ENCODE measurements at regions of chr12 and their contacts with region 1.

Region 1: GRCh38 chr12:92034858-92035401 is 110.7 kb downstream of the BTG1 start:
- DNase-seq: peak; percentile 86
- H3K4me3 Mint-ChIP-seq: peak overlapping the region; percentile 78
- H3K27ac Mint-ChIP-seq: peak overlapping the region; percentile 93
- H3K4me1 Mint-ChIP-seq: peaks cover 83% of the 10 kb centered on the region
- H3K27me3 Mint-ChIP-seq: no peaks in the 10 kb centered on the region

Region 2: GRCh38 chr12:91998316-91998715 is 36.6 kb before region 1 on chr12:
- CTCF ChIA-PET with region 1: no interaction called
- intact Hi-C with region 1: loop called (anchors 5 kb)
- DNase-seq: no peak
- H3K4me3 Mint-ChIP-seq: no peak overlapping the region
- H3K27ac Mint-ChIP-seq: no peak overlapping the region
- H3K4me1 Mint-ChIP-seq: peaks cover 50% of the 10 kb centered on the region
- H3K27me3 Mint-ChIP-seq: no peaks in the 10 kb centered on the region

Region 3: GRCh38 chr12:92047393-92047826 is 12.5 kb after region 1 on chr12:
- CTCF ChIA-PET with region 1: interaction called, 14 read pairs
- intact Hi-C with region 1: loop called (anchors 1 kb)
- DNase-seq: peak; percentile 43
- H3K4me3 Mint-ChIP-seq: peak overlapping the region; percentile 56
- H3K27ac Mint-ChIP-seq: peak overlapping the region; percentile 74
- H3K4me1 Mint-ChIP-seq: peaks cover 88% of the 10 kb centered on the region
- H3K27me3 Mint-ChIP-seq: no peaks in the 10 kb centered on the region

Region 4: GRCh38 chr12:92078167-92079053 is 43.5 kb after region 1 on chr12:
- CTCF ChIA-PET with region 1: no interaction called
- intact Hi-C with region 1: loop called (anchors 1 kb)
- DNase-seq: peak; percentile 49
- H3K4me3 Mint-ChIP-seq: no peak overlapping the region
- H3K27ac Mint-ChIP-seq: peak overlapping the region; percentile 77
- H3K4me1 Mint-ChIP-seq: peaks cover 78% of the 10 kb centered on the region
- H3K27me3 Mint-ChIP-seq: no peaks in the 10 kb centered on the region

Region 5: GRCh38 chr12:92136965-92137721 is 102.2 kb after region 1 on chr12:
- CTCF ChIA-PET with region 1: interaction called, 3 read pairs
- intact Hi-C with region 1: loop called (anchors 1 kb)
- DNase-seq: no peak
- H3K4me3 Mint-ChIP-seq: peak overlapping the region; percentile 100
- H3K27ac Mint-ChIP-seq: peak overlapping the region; percentile 99
- H3K4me1 Mint-ChIP-seq: peaks cover 58% of the 10 kb centered on the region
- H3K27me3 Mint-ChIP-seq: no peaks in the 10 kb centered on the region

Region 6: GRCh38 chr12:92696216-92696615 is 661.3 kb after region 1 on chr12:
- CTCF ChIA-PET with region 1: no interaction called
- intact Hi-C with region 1: no loop called
- DNase-seq: no peak
- H3K4me3 Mint-ChIP-seq: no peak overlapping the region
- H3K27ac Mint-ChIP-seq: no peak overlapping the region
- H3K4me1 Mint-ChIP-seq: no peaks in the 10 kb centered on the region
- H3K27me3 Mint-ChIP-seq: no peaks in the 10 kb centered on the region